MCF 10A (cell line): ENCODE measurements at regions of chr2 and their contacts with region 1.

Region 1: DNA sequence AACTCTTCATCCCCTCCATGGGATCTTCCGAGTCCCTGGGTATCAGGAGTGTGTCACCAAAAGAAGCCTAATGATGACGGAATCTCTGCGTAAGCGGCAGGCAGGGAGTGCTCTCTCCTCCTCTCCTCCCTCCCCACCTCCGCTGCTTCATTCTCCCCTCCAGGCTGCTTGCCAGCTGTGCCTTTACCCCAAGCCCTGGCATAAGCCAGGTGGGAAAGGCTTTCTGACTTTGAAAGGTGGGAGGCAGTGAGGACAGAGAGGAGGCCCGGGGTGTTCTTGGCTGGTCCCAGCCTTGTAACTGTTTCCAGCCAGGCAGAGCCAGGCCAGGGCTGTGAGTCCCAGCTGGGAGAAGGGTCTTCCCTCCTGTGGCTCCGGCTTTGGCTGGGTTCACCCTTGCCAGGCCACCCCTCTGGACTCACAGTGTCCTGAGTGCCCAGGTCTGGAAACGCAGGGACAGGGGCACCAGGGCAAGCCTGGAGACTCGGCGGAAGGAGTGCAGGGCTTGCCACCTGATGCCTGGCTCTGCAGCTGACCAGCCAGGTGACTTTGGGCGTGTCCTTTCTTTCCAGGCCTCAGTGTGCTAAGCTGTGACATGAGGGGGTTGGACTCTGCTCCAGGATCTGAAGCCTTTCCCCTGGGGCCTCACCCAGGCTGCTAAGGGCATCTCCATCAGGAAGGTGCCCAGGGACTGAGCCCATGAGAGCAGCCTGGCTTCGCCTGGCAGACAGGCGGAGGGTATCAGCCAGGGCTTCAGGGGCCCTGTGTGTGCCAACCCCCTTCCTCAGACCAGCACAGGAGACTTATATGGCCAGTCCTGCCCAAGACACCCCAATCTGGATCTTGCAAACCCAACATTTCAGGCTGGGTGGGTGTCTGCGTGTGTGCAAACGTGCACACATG is 32.7 kb upstream of the HPCAL1 start:
- DNase-seq: no peak
- H3K4me3 Mint-ChIP-seq: no peak overlapping the region
- H3K27ac Mint-ChIP-seq: peak overlapping the region; percentile 54
- H3K4me1 Mint-ChIP-seq: peaks cover 19% of the 10 kb centered on the region
- H3K27me3 Mint-ChIP-seq: no peaks in the 10 kb centered on the region
- CTCF ChIP-seq: no peak

Region 2: DNA sequence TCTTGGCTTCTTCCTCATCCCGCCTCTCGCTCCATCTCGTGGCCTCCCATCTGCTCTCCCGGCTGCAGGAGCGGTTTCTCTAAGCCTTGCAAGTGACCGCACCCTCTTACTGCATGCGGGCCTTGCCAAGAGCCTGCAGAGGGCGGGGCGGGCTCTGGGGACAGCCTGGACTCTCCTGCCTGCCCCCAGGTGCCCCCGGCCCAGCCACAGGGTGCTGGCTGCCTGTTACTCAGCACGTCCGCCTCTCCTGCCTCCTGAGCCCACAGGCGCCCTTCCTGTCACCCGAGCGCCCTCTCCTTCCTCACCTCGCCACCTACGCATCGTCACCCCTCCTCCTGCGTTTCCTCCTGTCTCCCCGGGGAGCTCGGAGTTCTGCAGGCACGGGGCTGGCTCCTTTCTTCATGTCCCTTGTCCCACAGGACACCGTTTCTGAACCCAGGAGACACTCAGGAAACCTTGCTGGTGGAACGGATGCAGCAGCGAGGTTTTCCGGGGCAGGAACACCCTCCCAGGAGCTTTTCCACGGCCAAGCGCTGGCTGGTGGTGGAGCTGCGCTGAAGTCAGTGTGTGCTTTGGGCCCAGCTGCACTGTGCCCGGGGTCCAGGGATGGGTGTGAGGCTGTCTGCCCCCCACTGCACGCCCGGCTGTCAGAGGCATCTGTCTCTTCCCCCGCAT is 61.2 kb after region 1 on chr2:
- CTCF ChIA-PET with region 1: no interaction called
- POLR2A ChIA-PET with region 1: no interaction called
- intact Hi-C with region 1: loop called (anchors 2 kb)
- DNase-seq: peak; percentile 75
- H3K4me3 Mint-ChIP-seq: peak overlapping the region; percentile 30
- H3K27ac Mint-ChIP-seq: peak overlapping the region; percentile 89
- H3K4me1 Mint-ChIP-seq: peaks cover 45% of the 10 kb centered on the region
- H3K27me3 Mint-ChIP-seq: no peaks in the 10 kb centered on the region
- CTCF ChIP-seq: no peak

Region 3: GRCh38 chr2:10382354-10383061 is 112.5 kb after region 1 on chr2:
- CTCF ChIA-PET with region 1: no interaction called
- POLR2A ChIA-PET with region 1: no interaction called
- intact Hi-C with region 1: no loop called
- DNase-seq: peak; percentile 31
- H3K4me3 Mint-ChIP-seq: no peak overlapping the region
- H3K27ac Mint-ChIP-seq: no peak overlapping the region
- H3K4me1 Mint-ChIP-seq: peaks cover 48% of the 10 kb centered on the region
- H3K27me3 Mint-ChIP-seq: no peaks in the 10 kb centered on the region
- CTCF ChIP-seq: no peak

Region 4: GRCh38 chr2:10424051-10424450 is 154.1 kb after region 1 on chr2:
- CTCF ChIA-PET with region 1: no interaction called
- POLR2A ChIA-PET with region 1: no interaction called
- intact Hi-C with region 1: no loop called
- DNase-seq: no peak
- H3K4me3 Mint-ChIP-seq: no peak overlapping the region
- H3K27ac Mint-ChIP-seq: no peak overlapping the region
- H3K4me1 Mint-ChIP-seq: no peaks in the 10 kb centered on the region
- H3K27me3 Mint-ChIP-seq: no peaks in the 10 kb centered on the region
- CTCF ChIP-seq: no peak

Region 5: DNA sequence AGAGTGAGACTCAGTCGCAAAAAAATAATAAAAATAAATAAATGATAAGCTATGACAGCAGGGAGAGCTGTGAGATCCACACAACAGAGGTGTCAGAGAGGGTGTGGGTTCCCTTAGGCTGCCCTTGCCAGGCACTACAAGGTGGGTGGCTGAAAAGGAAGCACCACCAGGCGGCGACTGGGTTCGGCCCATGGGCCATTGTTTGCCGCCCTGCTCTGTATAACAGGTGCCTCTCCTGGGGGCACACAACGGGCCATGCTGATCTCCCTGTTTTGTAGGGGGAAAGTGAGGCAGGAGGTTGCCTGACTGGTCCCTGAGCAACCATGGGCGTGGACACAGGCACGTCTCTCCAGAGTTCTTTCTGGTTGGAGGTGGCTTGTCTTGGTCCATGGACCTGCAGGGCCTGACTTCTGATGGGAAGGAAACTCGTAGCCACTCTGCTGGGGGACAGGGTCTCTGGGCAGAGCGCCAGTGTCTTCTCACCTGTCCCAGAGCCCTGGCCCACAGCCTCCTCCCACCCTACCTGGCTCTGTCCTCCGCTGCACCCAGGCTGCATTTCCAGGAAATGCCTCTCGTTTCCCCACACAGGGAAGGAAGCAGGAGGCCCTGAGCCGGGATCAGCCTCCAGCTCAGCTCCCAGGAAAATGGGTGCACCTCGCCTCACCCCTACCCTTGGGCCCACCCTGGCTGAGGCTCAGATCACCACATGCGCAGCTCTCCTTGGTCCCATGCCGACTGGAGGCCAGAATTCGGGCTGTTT is 287.7 kb after region 1 on chr2:
- CTCF ChIA-PET with region 1: no interaction called
- POLR2A ChIA-PET with region 1: no interaction called
- intact Hi-C with region 1: no loop called
- DNase-seq: no peak
- H3K4me3 Mint-ChIP-seq: no peak overlapping the region
- H3K27ac Mint-ChIP-seq: no peak overlapping the region
- H3K4me1 Mint-ChIP-seq: no peaks in the 10 kb centered on the region
- H3K27me3 Mint-ChIP-seq: no peaks in the 10 kb centered on the region
- CTCF ChIP-seq: no peak